ENCODE measurements at regions of chr16 and their contacts with region 1.

Region 1: GRCh38 chr16:69709456-69710084 is 16.8 kb downstream of the NQO1 start:
- DNase-seq: no peak
- H3K4me3 ChIP-seq: no peak overlapping the region
- H3K27ac ChIP-seq: peak overlapping the region in 3 of 8 donors; percentile 21 to 28 (median 22)
- H3K4me1 ChIP-seq: peaks cover 0 to 4% (median 0%) of the 10 kb centered on the region in 6 donors
- H3K27me3 ChIP-seq: no peaks in the 10 kb centered on the region
- CTCF ChIP-seq: peak; percentile 37 to 82 (median 73)
- POLR2A ChIP-seq: no peak

Region 2: GRCh38 chr16:69754469-69755310 is 45.1 kb after region 1 on chr16 and contains the start of gene NOB1:
- intact Hi-C with region 1: loop called (anchors 5 kb)
- DNase-seq: peak; percentile 100
- H3K4me3 ChIP-seq: peak within 1 kb of the TSS; percentile 61 to 100 (median 92)
- H3K27ac ChIP-seq: peak within 1 kb of the TSS; percentile 73 to 89 (median 81)
- H3K4me1 ChIP-seq: peaks cover 18 to 30% (median 28%) of the 10 kb centered on the region in 6 donors
- H3K27me3 ChIP-seq: no peaks in the 10 kb centered on the region
- CTCF ChIP-seq: peak; percentile 99 to 100 (median 100)
- POLR2A ChIP-seq: peak in 2 of 3 donors; percentile 54 to 64
- total RNA-seq, gene NOB1: 39.1 to 44.7 (median 39.7) TPM

Measured in spleen (tissue), 13 donors.